ENCODE measurements at regions of chr22 and their contacts with region 1.

Region 1: GRCh38 chr22:42621505-42622002 is 6.9 kb upstream of the POLDIP3 start:
- DNase-seq: no peak
- ATAC-seq: peak; percentile 93
- H3K4me3 ChIP-seq: no peak overlapping the region
- H3K27ac ChIP-seq: no peak overlapping the region
- H3K4me1 ChIP-seq: peaks cover 8% of the 10 kb centered on the region
- H3K27me3 ChIP-seq: no peaks in the 10 kb centered on the region
- CTCF ChIP-seq: peak; percentile 86 to 97 (median 95)
- EP300 ChIP-seq: no peak
- POLR2A ChIP-seq: peak; percentile 34
- RAD21 ChIP-seq: peak; percentile 61

Region 2: GRCh38 chr22:42642806-42643633 is 21.5 kb after region 1 on chr22:
- CTCF ChIA-PET with region 1: interaction called, 17 read pairs
- POLR2A ChIA-PET with region 1: no interaction called
- RAD21 ChIA-PET with region 1: interaction called, 19 read pairs
- SMC1A ChIA-PET with region 1: interaction called, 9 read pairs
- in situ Hi-C with region 1: no loop called
- intact Hi-C with region 1: no loop called
- DNase-seq: no peak
- ATAC-seq: peak; percentile 58
- H3K4me3 ChIP-seq: peak overlapping the region; percentile 50
- H3K27ac ChIP-seq: peak overlapping the region; percentile 84
- H3K4me1 ChIP-seq: peaks cover 37% of the 10 kb centered on the region
- H3K27me3 ChIP-seq: no peaks in the 10 kb centered on the region
- CTCF ChIP-seq: no peak
- EP300 ChIP-seq: no peak
- POLR2A ChIP-seq: no peak
- RAD21 ChIP-seq: no peak

Region 3: DNA sequence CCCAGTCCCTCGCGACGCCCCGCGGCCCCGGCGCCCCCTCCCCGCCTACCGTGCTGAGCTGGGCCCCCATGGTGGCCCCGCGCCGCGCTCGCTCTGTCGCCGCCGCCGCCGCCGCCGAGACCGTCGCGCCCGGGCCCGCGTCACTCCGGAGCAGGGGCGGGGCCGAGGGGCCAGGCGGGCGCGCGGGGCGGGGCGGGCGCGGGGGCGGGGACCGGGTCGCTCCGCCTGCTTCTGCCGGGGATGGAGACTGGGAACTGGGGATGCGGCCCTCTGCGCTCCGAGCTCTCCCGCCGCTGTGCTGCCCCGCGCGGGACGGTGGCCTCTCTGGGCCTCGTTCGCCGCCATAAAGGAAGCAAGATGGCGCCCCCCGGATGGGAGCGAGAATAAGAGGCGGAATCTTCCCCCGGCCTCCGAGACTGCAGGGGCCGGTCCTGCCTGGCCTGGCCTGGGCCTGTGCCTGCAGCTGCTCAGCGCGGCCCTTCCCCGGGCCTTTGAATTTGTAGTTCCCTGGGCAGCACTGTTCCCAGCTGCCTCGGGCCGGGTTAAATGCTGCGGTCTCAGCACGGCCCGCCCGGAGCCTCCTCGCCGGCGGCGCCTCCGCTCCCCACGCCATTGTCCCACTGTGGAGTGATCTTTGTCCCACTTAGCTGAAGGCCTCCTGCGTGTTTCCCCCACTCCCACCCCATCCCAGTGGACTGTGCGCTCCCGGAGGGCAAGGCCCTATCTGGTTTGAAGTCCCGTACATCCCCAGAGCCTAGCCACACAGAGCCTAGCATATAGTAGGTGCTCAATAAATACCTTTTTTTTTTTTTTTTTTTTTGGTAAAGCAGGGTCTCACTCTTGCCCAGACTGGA is 27.9 kb after region 1 on chr22 and contains the start of gene CYB5R3:
- CTCF ChIA-PET with region 1: interaction called, 17 read pairs
- POLR2A ChIA-PET with region 1: interaction called, 4 read pairs
- RAD21 ChIA-PET with region 1: interaction called, 19 read pairs
- SMC1A ChIA-PET with region 1: interaction called, 12 read pairs
- in situ Hi-C with region 1: no loop called
- intact Hi-C with region 1: no loop called
- DNase-seq: no peak
- ATAC-seq: peak; percentile 79
- H3K4me3 ChIP-seq: peak within 1 kb of the TSS; percentile 100
- H3K27ac ChIP-seq: peak within 1 kb of the TSS; percentile 85
- H3K4me1 ChIP-seq: peaks cover 25% of the 10 kb centered on the region
- H3K27me3 ChIP-seq: no peaks in the 10 kb centered on the region
- CTCF ChIP-seq: no peak
- EP300 ChIP-seq: no peak
- POLR2A ChIP-seq: peak; percentile 82
- RAD21 ChIP-seq: no peak
- polyA plus RNA-seq, gene CYB5R3: 2.0 to 3.5 TPM

Region 4: DNA sequence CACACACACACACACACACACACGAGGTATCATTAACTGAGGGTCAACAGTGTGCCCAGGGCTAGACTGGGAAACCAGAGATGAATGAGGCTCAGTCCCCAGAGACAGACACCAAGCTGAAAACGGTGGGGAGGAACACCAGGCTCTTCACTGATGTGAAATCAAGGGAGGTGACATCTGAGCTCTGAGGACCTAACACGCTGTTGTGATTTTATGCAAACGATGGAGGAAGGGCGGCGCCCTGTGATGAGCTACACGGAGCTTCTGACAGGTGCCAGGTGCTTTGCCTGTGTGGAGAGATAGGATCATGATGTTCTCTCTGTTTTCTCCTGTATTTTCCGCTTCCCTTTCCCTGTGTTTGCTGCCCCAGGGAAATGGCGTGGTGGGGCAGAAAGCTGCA is 34.1 kb after region 1 on chr22:
- CTCF ChIA-PET with region 1: interaction called, 14 read pairs
- POLR2A ChIA-PET with region 1: interaction called, 5 read pairs
- RAD21 ChIA-PET with region 1: interaction called, 6 read pairs
- SMC1A ChIA-PET with region 1: interaction called, 12 read pairs
- in situ Hi-C with region 1: no loop called
- intact Hi-C with region 1: no loop called
- DNase-seq: peak; percentile 71
- ATAC-seq: peak; percentile 87
- H3K4me3 ChIP-seq: no peak overlapping the region
- H3K27ac ChIP-seq: no peak overlapping the region
- H3K4me1 ChIP-seq: peaks cover 10% of the 10 kb centered on the region
- H3K27me3 ChIP-seq: no peaks in the 10 kb centered on the region
- CTCF ChIP-seq: no peak
- EP300 ChIP-seq: no peak
- POLR2A ChIP-seq: no peak
- RAD21 ChIP-seq: no peak

Region 5: DNA sequence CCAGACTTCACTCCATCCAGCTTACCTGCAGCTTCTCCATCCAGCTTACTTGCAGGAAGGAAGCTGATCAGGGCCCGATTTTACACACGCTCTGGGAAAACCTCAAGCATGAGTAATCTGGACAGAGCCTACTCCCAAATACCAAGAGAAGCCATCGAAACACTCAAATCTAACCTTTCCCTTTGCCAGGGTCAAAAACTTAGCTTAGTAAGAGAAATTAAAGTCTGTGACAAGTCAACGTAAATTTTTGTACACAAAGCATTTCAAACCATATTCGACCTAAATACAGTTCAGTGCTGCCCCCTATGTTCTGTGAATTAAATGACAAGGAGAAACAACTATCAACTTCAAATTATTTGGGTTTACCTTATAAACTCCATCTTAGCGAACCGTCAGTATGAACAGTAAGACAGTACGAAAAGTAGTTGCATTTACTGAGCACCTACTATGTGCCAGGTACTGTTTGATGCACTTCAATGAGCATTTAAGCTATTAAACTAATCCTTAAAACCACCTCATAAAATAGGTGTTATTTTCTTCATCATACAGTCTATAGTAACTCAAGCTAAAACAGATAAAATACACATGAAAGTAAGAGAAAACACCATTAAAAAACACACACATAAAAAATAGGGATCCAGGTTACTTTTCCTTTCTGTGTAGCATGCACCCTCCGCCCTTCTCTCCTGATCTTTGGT is 198.7 kb after region 1 on chr22:
- CTCF ChIA-PET with region 1: interaction called, 18 read pairs
- POLR2A ChIA-PET with region 1: no interaction called
- RAD21 ChIA-PET with region 1: interaction called, 5 read pairs
- SMC1A ChIA-PET with region 1: interaction called, 15 read pairs
- in situ Hi-C with region 1: no loop called
- intact Hi-C with region 1: loop called (anchors 1 kb)
- DNase-seq: no peak
- ATAC-seq: no peak
- H3K4me3 ChIP-seq: no peak overlapping the region
- H3K27ac ChIP-seq: no peak overlapping the region
- H3K4me1 ChIP-seq: no peaks in the 10 kb centered on the region
- H3K27me3 ChIP-seq: no peaks in the 10 kb centered on the region
- CTCF ChIP-seq: peak in 2 of 3 experiments; percentile 46 to 49; a peak in 3 of 6 replicates
- EP300 ChIP-seq: no peak
- POLR2A ChIP-seq: no peak
- RAD21 ChIP-seq: peak; percentile 56